HepG2 (cell line): ENCODE measurements at regions of chr3 and their contacts with region 1.

Region 1: DNA sequence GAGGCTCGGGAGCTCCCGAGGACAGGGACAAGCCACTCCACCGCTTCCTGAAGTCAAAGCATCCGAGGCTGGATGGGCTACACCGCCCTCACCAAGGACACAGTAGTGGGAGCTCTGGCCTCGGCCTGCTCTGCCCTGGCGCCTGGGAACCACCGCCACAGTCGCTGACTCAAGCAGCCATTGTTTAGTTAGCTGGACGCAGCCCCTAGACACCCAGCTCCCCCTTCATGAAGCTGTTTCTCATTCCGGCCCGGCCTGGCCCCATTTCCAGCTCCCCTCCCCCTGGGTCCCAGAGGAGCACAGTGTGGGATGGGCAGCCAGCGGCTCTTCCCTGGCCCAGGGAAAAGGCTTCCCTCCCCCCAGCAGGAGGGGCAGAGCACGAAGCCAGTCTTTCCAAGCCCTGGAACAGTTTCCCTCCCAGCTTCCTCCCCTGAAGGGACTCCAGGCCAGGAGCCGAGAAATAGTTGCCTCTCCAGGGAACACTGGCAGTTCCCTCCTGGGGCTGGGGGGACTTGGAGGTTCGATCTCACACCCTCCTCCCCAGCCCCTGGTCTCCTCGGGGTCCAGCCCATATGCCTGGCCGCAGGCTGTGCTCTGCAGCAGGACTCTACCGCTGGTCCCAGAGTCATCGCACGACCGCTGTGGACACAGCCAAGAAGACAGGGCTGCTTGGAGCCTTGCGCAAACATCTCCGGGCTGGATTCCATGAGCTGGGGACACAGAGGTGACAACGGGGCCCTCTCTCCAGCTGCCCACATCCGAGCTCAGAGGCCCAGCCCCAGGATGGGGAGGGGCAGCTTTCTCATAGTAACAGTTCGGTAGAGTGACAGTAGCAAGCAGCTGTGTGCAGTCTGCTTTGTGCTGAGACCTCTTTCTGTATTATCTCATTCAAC is 10.0 kb downstream of the PLXND1 start:
- DNase-seq: peak; percentile 91
- ATAC-seq: peak; percentile 72
- H3K4me3 ChIP-seq: peak overlapping the region; percentile 35 to 70 (median 45)
- H3K27ac ChIP-seq: peak overlapping the region; percentile 94
- H3K4me1 ChIP-seq: peaks cover 91% of the 10 kb centered on the region
- H3K27me3 ChIP-seq: no peaks in the 10 kb centered on the region
- CTCF ChIP-seq: 0 out of 2 replicates have a peak, but pooled peaks have one; percentile 5
- EP300 ChIP-seq: peak in 1 of 2 experiments; percentile 61; a peak in 2 of 4 replicates
- POLR2A ChIP-seq: peak in 1 of 2 experiments; percentile 53; a peak in 1 of 4 replicates
- RAD21 ChIP-seq: no peak

Region 2: GRCh38 chr3:129490242-129491045 is 106.0 kb before region 1 on chr3:
- CTCF ChIA-PET with region 1: no interaction called
- POLR2A ChIA-PET with region 1: interaction called, 18 read pairs
- in situ Hi-C with region 1: no loop called
- intact Hi-C with region 1: loop called (anchors 1 kb)
- DNase-seq: peak; percentile 83
- ATAC-seq: peak; percentile 94
- H3K4me3 ChIP-seq: no peak overlapping the region
- H3K27ac ChIP-seq: peak overlapping the region; percentile 23
- H3K4me1 ChIP-seq: peaks cover 31% of the 10 kb centered on the region
- H3K27me3 ChIP-seq: no peaks in the 10 kb centered on the region
- CTCF ChIP-seq: peak; percentile 96
- EP300 ChIP-seq: no peak
- POLR2A ChIP-seq: no peak
- RAD21 ChIP-seq: peak; percentile 97

Region 3: GRCh38 chr3:129534428-129535027 is 61.9 kb before region 1 on chr3:
- CTCF ChIA-PET with region 1: no interaction called
- POLR2A ChIA-PET with region 1: interaction called, 33 read pairs
- in situ Hi-C with region 1: no loop called
- intact Hi-C with region 1: no loop called
- DNase-seq: peak; percentile 62
- ATAC-seq: peak; percentile 60
- H3K4me3 ChIP-seq: peak overlapping the region; percentile 3 to 59 (median 30); a peak in 5 of 6 replicates
- H3K27ac ChIP-seq: peak overlapping the region; percentile 66
- H3K4me1 ChIP-seq: peaks cover 79% of the 10 kb centered on the region
- H3K27me3 ChIP-seq: no peaks in the 10 kb centered on the region
- CTCF ChIP-seq: no peak
- EP300 ChIP-seq: peak in 1 of 2 experiments; percentile 21; a peak in 1 of 4 replicates
- POLR2A ChIP-seq: no peak
- RAD21 ChIP-seq: no peak

Region 4: GRCh38 chr3:129558772-129559564 is 37.5 kb before region 1 on chr3:
- CTCF ChIA-PET with region 1: no interaction called
- POLR2A ChIA-PET with region 1: interaction called, 12 read pairs
- in situ Hi-C with region 1: no loop called
- intact Hi-C with region 1: no loop called
- DNase-seq: peak; percentile 74
- ATAC-seq: peak; percentile 70
- H3K4me3 ChIP-seq: no peak overlapping the region; a peak in 1 of 6 replicates
- H3K27ac ChIP-seq: peak overlapping the region; percentile 69
- H3K4me1 ChIP-seq: peaks cover 34% of the 10 kb centered on the region
- H3K27me3 ChIP-seq: no peaks in the 10 kb centered on the region; a peak in 1 of 5 replicates
- CTCF ChIP-seq: no peak
- EP300 ChIP-seq: peak; percentile 52 to 70; a peak in 3 of 4 replicates
- POLR2A ChIP-seq: no peak
- RAD21 ChIP-seq: peak; percentile 25; the same call in 1 of the 2 replicates

Region 5: DNA sequence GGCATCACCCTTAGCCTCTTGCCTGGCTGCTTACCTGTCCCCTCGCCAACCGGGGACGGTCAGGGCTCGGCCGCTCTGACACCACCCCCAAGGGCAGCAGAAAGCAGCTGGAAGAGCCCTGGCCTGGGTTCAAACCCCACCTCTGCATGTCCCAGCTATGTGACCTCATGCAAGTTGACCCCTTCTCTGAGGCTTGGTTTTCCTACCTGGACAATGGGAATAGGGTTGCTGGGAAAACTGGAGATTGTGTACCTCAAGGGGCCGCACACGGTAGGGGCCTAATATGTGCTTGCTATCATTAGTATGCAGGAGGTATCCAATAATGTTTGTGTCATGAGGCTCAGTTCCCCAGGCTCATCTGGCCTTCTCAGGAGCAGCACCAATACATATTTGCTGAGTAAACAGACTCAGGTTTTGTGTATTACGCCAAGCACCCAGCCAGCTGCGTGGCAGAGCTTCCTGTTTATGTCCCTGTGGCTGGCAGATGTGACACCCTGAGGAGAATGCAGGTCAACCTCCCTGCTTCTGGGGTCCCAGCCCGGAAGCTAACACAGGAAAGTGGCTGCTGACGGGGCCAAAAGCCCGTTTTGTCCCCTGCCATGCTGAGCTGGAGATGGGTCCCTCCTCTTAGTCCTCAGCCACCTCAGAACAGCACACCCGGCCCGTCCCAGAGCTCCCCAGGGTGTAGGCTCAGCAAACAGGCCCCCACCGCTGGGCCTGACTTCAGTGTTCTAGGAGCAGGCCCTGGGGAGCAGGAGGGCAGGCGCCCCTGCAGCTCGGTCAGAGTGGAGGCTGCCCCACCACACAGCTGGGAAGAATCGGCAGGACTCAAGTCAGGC is 19.7 kb before region 1 on chr3:
- CTCF ChIA-PET with region 1: no interaction called
- POLR2A ChIA-PET with region 1: interaction called, 20 read pairs
- in situ Hi-C with region 1: no loop called
- intact Hi-C with region 1: no loop called
- DNase-seq: peak; percentile 33
- ATAC-seq: peak; percentile 56
- H3K4me3 ChIP-seq: no peak overlapping the region
- H3K27ac ChIP-seq: peak overlapping the region; percentile 35
- H3K4me1 ChIP-seq: peaks cover 13% of the 10 kb centered on the region
- H3K27me3 ChIP-seq: no peaks in the 10 kb centered on the region
- CTCF ChIP-seq: no peak
- EP300 ChIP-seq: no peak
- POLR2A ChIP-seq: no peak
- RAD21 ChIP-seq: no peak

Region 6: DNA sequence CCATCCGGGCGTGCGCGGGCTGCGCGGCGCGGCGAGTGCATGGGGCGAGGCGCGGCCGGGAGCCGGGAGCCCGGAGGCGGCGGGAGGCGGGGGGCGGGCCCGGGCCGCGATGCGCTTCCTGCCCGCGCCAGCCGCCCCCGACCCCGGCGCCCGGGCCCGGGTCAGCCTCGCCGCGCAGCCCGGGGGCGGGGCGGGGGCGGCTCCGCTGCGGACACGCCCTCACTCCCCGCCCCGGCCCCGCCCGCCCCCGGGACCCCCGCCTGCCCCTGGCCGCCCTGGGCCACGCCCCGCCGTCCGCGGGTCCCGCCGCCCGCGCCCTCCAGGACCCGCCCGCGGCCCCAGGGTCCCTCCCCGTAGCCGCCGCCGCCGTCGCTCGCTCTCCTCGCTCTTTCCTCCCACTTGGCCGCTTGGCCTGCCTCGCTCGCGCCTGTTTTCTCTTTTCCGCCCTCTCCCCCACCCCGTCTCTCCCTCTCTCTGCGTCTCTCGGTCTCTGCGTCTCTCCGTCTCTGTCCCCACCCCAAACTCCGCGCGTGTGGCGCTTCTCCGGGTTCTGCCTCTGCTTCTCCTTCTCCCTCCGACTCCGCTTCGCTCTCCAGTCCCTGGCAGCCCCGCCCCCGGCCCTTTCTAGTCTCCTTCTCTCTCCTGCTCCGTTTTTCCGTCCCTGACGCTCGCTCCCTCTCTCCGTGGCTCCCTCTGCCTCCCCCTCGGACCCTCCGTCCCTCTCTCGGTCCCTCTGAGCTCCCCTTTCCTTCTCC is 10.4 kb after region 1 on chr3 and contains the start of gene PLXND1:
- CTCF ChIA-PET with region 1: no interaction called
- POLR2A ChIA-PET with region 1: interaction called, 42 read pairs
- in situ Hi-C with region 1: no loop called
- intact Hi-C with region 1: loop called (anchors 1 kb)
- DNase-seq: no peak
- ATAC-seq: peak; percentile 54
- H3K4me3 ChIP-seq: peak within 1 kb of the TSS; percentile 77 to 92 (median 91)
- H3K27ac ChIP-seq: peak within 1 kb of the TSS; percentile 62
- H3K4me1 ChIP-seq: peaks cover 74% of the 10 kb centered on the region
- H3K27me3 ChIP-seq: no peaks in the 10 kb centered on the region; a peak in 1 of 5 replicates
- CTCF ChIP-seq: 0 out of 2 replicates have a peak, but pooled peaks have one; percentile 8
- EP300 ChIP-seq: no peak
- POLR2A ChIP-seq: no peak
- RAD21 ChIP-seq: no peak
- total RNA-seq, gene PLXND1: 15.9 and 25.3 TPM in 2 replicates

Region 7: DNA sequence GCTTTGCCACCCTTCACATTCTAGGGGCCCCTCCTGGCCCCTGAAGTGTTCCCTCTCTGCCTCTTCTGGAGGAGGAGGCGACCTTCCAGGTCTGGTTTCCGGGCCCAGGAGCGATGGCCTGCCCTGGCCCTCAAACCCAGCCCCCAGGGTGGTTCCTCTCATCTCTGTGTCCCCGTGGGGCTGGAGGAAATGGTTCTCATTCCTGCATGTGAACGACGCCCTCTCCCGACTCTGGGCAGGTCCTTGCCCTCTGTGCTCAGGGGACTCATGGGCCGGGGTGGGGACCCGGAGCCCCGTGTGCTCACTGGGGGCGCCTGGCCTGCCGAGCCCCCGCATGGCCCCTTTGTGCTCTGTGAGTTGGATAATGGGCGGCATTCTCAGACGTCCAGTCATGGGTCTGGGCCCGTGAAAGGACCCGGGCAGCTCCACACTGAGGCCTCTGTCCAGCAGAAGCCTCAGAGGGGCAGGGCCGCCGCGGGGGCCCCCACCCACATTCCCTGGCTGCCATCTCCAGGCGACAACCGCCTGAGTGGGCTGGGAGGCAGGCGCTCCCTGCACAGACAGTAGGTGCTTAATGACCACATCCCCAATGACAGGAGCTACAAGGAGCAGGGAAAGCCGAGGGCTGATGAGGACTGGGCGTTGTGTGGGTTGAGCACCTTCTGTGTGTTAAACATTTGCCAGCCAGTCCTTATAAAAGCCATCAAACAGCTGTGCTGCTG is 15.5 kb after region 1 on chr3:
- CTCF ChIA-PET with region 1: no interaction called
- POLR2A ChIA-PET with region 1: interaction called, 25 read pairs
- in situ Hi-C with region 1: no loop called
- intact Hi-C with region 1: loop called (anchors 1 kb)
- DNase-seq: peak; percentile 70
- ATAC-seq: peak; percentile 47
- H3K4me3 ChIP-seq: peak overlapping the region in 2 of 3 experiments; percentile 31 to 69; a peak in 4 of 6 replicates
- H3K27ac ChIP-seq: peak overlapping the region; percentile 33
- H3K4me1 ChIP-seq: peaks cover 94% of the 10 kb centered on the region
- H3K27me3 ChIP-seq: no peaks in the 10 kb centered on the region; a peak in 1 of 5 replicates
- CTCF ChIP-seq: peak; percentile 74
- EP300 ChIP-seq: no peak; a peak in 1 of 4 replicates
- POLR2A ChIP-seq: no peak
- RAD21 ChIP-seq: no peak